ENCODE measurements at regions of chr7 and their contacts with region 1.

Region 1: GRCh38 chr7:28926871-28927597 is 31.1 kb downstream of the TRIL start:
- ATAC-seq: peak; percentile 83 to 94 (median 90)
- H3K4me3 ChIP-seq: peak overlapping the region; percentile 20 to 38 (median 28)
- H3K27ac ChIP-seq: no peak overlapping the region
- H3K4me1 ChIP-seq: peaks cover 8 to 12% of the 10 kb centered on the region in 2 donors

Region 2: GRCh38 chr7:29105752-29106668 is 179.0 kb after region 1 on chr7:
- in situ Hi-C with region 1: loop called in 7 of 9 experiments (anchors 5 to 10 kb)
- ATAC-seq: peak; percentile 74 to 87 (median 82)
- H3K4me3 ChIP-seq: no peak overlapping the region
- H3K27ac ChIP-seq: no peak overlapping the region
- H3K4me1 ChIP-seq: no peaks in the 10 kb centered on the region

Region 3: DNA sequence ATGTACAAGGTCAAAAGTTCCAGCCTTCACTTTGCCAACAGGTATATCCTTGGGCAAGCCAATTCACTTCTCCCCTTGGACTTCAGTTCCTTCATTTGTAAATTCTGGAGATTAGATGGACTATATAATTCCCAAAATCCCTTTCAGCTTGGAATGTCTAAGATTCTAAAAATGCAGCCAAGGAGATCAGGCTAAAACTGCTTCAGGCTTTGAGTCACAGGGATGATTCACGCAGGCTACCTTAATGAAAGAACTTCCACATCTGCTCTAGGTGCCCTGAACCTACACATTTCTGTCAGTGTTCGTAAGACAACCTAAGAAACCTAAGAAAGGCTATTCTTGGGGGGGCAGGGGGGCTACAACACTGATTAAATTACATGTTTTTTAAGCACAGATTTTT is 212.2 kb after region 1 on chr7:
- in situ Hi-C with region 1: no loop called
- ATAC-seq: no peak
- H3K4me3 ChIP-seq: no peak overlapping the region
- H3K27ac ChIP-seq: no peak overlapping the region
- H3K4me1 ChIP-seq: no peaks in the 10 kb centered on the region

Region 4: GRCh38 chr7:29375641-29376562 is 448.9 kb after region 1 on chr7:
- in situ Hi-C with region 1: loop called in 1 of 9 experiments (anchors 25 kb)
- ATAC-seq: peak in 6 of 8 experiments; percentile 25 to 70 (median 32)
- H3K4me3 ChIP-seq: no peak overlapping the region
- H3K27ac ChIP-seq: no peak overlapping the region
- H3K4me1 ChIP-seq: peaks cover under 1 to 5% of the 10 kb centered on the region in 2 donors

Region 5: DNA sequence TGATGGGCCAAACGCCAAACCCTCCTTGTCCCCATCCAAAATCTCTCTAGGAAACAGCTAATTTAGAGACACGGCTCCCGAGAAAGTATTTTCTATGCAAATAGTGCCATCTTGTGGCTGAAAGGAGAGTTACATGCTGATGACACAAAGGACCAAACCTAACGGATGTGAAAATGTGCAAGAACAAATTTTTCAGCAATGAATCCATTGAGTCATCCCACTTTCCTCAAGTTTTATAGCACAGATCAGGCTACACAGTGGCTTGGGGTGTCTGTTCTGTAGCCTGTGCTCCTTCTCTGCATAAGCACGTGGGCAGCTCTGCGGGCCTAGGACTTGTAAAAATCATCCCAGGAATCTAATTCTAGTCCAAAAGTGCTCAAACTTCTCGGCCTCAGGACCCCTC is 481.8 kb after region 1 on chr7:
- in situ Hi-C with region 1: loop called in 8 of 9 experiments (anchors 5 to 25 kb)
- ATAC-seq: peak; percentile 59 to 97 (median 69)
- H3K4me3 ChIP-seq: no peak overlapping the region
- H3K27ac ChIP-seq: no peak overlapping the region
- H3K4me1 ChIP-seq: no peaks in the 10 kb centered on the region

Measured in motor neuron (in vitro differentiated cells).